ENCODE measurements at regions of chr17 and their contacts with region 1.

Region 1: GRCh38 chr17:31570951-31571892 is 179.7 kb downstream of the RAB11FIP4 start:
- DNase-seq: no peak
- ATAC-seq: peak; percentile 30
- H3K4me3 ChIP-seq: no peak overlapping the region
- H3K27ac ChIP-seq: peak overlapping the region; percentile 49
- H3K4me1 ChIP-seq: peaks cover 52% of the 10 kb centered on the region
- H3K27me3 ChIP-seq: no peaks in the 10 kb centered on the region
- CTCF ChIP-seq: no peak

Region 2: GRCh38 chr17:31629696-31630470 is 58.7 kb after region 1 on chr17:
- intact Hi-C with region 1: loop called (anchors 10 kb)
- DNase-seq: no peak
- ATAC-seq: no peak
- H3K4me3 ChIP-seq: no peak overlapping the region
- H3K27ac ChIP-seq: no peak overlapping the region
- H3K4me1 ChIP-seq: no peaks in the 10 kb centered on the region
- H3K27me3 ChIP-seq: no peaks in the 10 kb centered on the region
- CTCF ChIP-seq: no peak

Measured in upper lobe of right lung (tissue), 1 donor.